SK-N-SH (cell line): ENCODE measurements at regions of chr1 and their contacts with region 1.

Region 1: DNA sequence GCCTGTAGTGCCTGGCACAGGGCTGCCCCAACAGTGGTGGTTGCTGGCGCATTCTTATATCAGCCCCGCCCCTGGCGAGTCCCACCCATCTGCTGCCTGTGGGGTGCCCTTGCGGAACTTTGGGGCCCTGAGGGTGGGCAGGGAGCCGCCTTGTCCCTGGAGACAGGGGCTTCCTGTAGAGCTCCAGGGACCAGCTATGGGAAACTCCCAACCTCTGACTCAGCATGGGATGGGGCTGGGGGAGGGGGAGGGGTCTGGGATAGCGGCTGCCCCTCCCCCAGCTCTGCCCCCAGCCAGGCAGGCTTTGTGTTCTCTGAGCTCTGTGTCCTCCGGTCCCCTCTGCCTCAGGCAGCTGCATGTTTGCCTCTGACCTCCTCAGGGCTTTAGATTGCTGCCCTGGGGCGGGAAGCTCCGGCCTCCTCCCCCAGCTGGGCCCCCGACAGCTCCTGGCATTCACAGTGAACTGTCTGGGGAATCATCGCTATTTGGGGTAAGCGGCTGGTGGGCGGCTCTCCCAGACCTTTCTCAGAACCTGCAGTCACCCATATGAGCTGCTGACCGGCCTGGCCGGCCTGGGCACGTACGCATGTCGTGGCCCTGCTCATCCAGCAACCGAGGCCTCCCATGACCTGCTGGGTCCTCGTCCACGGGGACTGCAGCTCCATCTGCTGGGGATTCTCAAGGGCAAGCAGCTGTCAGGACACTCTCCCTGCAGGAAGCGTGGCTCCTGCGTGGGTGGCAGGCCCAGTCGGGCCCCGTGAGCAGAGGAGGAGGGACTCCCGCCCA is 17.0 kb downstream of the ARHGEF16 start:
- DNase-seq: peak; percentile 73
- H3K4me3 ChIP-seq: no peak overlapping the region
- H3K27ac ChIP-seq: no peak overlapping the region
- H3K4me1 ChIP-seq: peaks cover 0 to 7% of the 10 kb centered on the region in 2 experiments; a peak in 2 of 4 replicates
- H3K27me3 ChIP-seq: no peaks in the 10 kb centered on the region
- CTCF ChIP-seq: peak; percentile 28
- EP300 ChIP-seq: no peak
- RAD21 ChIP-seq: peak; percentile 45

Region 2: GRCh38 chr1:3460672-3461131 is 10.8 kb before region 1 on chr1:
- CTCF ChIA-PET with region 1: interaction called, 13 read pairs
- POLR2A ChIA-PET with region 1: no interaction called
- DNase-seq: no peak
- H3K4me3 ChIP-seq: no peak overlapping the region
- H3K27ac ChIP-seq: no peak overlapping the region
- H3K4me1 ChIP-seq: peaks cover 0 to 30% of the 10 kb centered on the region in 2 experiments; a peak in 1 of 4 replicates
- H3K27me3 ChIP-seq: no peaks in the 10 kb centered on the region
- CTCF ChIP-seq: no peak
- EP300 ChIP-seq: no peak
- RAD21 ChIP-seq: no peak

Region 3: DNA sequence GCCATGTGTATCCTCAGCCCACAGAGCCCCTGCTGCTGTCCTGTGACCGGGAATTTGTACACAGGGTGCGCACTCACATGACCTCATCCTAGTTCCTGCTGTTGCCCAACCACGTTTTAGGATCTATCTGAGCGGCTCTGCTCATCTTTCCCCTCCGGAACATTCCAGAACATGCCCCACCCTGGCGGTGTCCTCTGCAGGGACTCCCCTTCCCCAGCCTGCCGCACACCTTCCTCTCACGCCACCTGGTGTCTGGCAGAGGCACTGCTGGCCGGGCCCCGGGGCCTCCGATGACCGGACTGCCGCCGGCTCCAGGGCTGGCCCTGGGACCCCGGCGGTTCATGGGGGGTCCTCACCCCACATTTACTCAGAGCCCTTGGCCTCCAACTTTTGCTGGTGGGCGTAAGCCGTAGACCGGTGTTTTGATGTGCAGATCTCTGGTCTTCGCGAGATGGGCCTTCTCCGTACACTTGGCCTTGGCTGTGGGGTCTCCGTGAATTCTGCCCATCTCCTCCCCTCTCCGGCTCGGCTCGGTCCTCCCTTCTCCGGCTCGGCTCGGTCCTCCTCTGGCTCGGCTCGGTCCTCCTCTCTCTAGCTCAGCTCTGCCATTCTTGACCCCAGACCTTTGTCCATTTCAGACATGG is 12.4 kb after region 1 on chr1:
- CTCF ChIA-PET with region 1: interaction called, 10 read pairs
- POLR2A ChIA-PET with region 1: no interaction called
- DNase-seq: peak; percentile 83
- H3K4me3 ChIP-seq: no peak overlapping the region
- H3K27ac ChIP-seq: no peak overlapping the region
- H3K4me1 ChIP-seq: peaks cover 0 to 5% of the 10 kb centered on the region in 2 experiments; a peak in 1 of 4 replicates
- H3K27me3 ChIP-seq: no peaks in the 10 kb centered on the region
- CTCF ChIP-seq: peak; percentile 60
- EP300 ChIP-seq: no peak
- RAD21 ChIP-seq: peak; percentile 47